AG04450 (cell line): ENCODE measurements at regions of chr14 and their contacts with region 1.

Region 1: DNA sequence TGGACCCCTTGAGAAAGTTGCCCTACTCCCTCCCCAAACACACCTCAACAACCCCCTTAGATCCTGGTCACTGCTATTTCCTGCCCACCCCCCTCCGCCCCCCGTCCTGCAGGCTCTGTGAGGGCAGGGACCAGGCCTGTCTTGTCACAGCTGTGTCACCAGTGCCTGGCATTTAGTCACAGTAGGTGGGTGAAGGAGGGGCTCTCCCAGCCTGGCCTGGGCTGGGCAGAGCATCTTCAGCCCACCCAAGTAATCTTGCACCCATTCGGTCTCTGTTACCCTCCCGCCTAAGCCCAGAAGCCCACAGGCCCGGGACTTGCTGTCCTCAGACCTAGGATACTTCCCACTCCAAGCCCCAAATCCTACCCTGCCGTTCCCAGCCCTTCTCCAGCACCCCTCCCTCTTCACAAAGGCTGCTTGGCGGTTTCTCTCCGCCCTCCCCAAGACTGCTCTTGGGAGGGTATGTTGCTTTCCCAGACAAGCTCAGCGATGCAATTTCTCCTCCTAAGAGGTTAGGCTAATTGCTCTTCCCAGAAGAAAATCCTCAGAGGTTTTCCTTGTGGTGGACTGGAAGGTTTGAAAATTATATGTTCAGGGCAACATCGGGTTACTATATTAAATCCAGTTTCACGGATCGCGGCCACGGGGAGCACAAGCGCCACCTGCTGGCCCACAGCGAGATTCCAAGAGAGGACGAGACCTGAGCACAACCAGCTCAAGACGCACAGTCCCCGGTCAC is 50.8 kb upstream of the ZFP36L1 start:
- DNase-seq: peak; percentile 34
- H3K4me3 ChIP-seq: no peak overlapping the region
- H3K27ac ChIP-seq: no peak overlapping the region
- H3K27me3 ChIP-seq: no peaks in the 10 kb centered on the region
- CTCF ChIP-seq: peak; percentile 93

Region 2: DNA sequence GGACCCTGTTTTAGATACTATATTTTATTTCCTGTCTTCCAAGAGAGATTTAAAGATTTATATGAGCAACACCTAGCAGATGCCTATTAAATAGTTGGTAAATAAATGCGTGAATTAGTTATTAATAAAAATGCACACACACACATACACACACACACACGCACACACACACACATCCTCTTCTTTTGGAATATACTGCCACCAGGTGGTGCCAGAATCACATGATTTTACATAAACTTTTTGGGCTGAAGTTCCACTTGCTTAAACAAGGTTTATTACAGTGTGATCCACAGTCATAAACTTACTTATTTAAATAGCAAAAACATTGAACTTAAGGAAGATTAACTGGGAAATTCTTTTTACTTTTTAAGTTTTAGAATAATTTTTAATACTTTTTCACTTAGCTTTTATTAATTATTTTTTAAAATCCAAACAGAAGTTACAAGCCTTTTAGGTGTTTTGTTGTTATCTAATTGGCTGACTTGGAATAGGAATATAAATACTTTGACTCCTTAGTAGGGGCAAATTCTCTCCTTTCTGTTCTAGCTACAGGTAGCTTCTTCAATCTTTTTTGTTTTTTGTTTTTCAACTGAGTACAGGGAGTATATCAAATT is 1006.5 kb before region 1 on chr14:
- CTCF ChIA-PET with region 1: interaction called, 29 read pairs
- POLR2A ChIA-PET with region 1: no interaction called
- DNase-seq: peak; percentile 61
- H3K4me3 ChIP-seq: no peak overlapping the region
- H3K27ac ChIP-seq: no peak overlapping the region
- H3K27me3 ChIP-seq: no peaks in the 10 kb centered on the region
- CTCF ChIP-seq: peak; percentile 76

Region 3: DNA sequence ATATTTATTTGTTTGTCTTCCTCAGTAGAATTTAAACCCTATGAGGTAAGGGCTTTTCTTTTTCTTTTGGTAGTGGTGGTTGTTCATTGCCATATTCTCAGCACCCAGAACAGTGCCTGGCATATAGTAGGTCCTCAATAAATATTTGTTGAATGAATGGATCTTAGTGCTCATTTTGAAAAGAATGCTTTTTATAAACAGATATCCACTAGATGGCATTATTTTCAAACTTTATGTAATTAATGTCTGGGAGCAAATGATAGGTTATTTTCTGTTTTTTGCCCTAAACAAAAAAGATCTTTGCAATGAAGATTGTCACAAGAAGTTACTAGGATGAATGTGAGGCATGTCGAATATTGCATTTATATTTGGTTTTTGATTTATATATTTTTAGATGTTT is 959.9 kb before region 1 on chr14:
- CTCF ChIA-PET with region 1: interaction called, 32 read pairs
- POLR2A ChIA-PET with region 1: no interaction called
- DNase-seq: no peak
- H3K4me3 ChIP-seq: no peak overlapping the region
- H3K27ac ChIP-seq: no peak overlapping the region
- H3K27me3 ChIP-seq: no peaks in the 10 kb centered on the region
- CTCF ChIP-seq: peak; percentile 28

Region 4: DNA sequence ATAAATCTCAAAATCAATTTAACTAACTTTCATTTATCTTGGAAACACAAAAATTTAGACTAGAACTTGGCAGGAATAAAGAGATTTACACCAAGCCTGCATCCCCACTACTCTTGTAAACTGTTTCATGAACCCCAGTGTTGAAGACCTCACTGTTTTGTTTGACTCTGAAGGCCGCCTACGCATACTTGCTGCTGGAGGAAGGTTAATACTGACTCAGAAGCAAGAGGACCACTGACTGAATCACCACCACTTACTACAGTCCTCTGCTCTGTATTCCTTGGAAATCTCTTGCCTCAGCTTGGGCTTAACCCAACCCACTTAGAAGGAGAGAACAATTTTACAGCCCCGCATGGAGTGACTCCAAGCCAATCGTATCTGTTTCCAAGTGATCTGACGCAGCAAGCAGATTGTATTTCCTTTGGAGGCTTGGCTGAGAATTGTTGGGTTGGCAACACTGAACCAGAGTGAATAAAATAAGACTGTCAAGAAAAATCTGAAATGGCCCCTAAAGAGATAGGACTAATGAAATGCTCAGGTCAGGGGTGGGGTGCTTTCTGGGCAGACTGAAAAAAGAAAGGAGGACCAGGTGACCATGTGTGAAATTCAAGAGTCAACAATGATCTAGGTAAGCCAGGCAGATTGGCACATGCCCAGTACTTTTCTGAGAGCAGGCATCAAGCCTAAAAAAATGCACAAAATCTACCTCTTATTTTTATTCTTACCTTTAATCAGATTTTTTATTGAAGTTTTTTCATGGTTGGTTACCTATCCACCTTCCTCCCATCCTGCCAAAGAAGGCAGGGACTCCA is 299.4 kb before region 1 on chr14:
- CTCF ChIA-PET with region 1: no interaction called
- POLR2A ChIA-PET with region 1: no interaction called
- DNase-seq: peak; percentile 97
- H3K4me3 ChIP-seq: no peak overlapping the region
- H3K27ac ChIP-seq: peak overlapping the region; percentile 95
- H3K27me3 ChIP-seq: no peaks in the 10 kb centered on the region
- CTCF ChIP-seq: no peak